ENCODE measurements at regions of chr14 and their contacts with region 1.

Region 1: GRCh38 chr14:61476754-61477410 is 155.5 kb downstream of the PRKCH start:
- DNase-seq: no peak

Region 2: GRCh38 chr14:61525293-61526011 is 48.6 kb after region 1 on chr14:
- intact Hi-C with region 1: loop called (anchors 2 kb)
- DNase-seq: peak in 4 of 10 donors; percentile 33 to 91 (median 53)